ENCODE measurements at regions of chr6 and their contacts with region 1.

Region 1: DNA sequence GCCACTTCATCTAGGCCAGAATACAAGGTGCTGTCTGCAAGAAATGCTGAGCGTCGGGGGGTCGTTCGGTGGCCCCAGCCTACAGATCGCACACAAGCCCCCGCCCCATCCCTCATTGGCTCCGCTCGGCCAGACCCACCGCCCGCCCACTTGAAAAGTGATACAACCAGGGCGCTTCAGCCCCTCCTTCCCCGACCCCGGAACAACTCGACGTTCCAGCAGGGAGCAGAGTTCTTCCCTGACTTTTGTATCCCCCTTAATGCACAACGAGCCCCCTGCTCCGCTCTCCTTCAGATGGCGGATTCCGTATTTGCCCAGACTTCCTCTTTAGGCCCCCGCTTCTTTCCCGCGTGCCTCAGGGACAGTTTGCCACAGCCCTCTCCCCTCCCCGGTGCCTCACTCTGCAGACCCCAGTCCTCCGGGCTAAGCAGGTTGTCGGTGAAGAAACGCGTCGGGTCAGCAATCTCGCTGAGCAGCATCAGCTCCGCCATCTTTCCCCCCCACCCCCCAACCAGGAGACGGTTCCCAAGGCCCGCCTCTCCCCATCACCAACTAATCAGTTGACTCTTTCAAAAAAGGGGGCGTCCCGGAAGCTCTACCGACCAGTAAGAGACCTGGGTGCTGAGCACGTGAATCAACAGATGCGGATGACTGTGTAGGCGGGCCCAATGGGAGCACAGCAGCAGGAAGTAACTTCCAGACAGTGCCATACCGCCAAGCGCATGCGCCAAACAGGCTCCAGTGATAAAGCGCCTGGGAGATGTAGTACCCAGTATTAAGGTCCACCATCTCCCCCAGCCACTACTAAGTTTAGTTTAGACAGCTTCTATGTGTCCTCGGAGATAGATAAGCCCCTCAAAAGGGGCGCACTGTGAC is at the start of gene ATF6B:
- DNase-seq: peak; percentile 81
- ATAC-seq: peak; percentile 92
- H3K4me3 Mint-ChIP-seq: peak within 1 kb of the TSS; percentile 99
- H3K27ac Mint-ChIP-seq: peak within 1 kb of the TSS; percentile 95
- H3K4me1 Mint-ChIP-seq: peaks cover 53% of the 10 kb centered on the region
- H3K27me3 Mint-ChIP-seq: no peaks in the 10 kb centered on the region
- CTCF ChIP-seq: no peak
- total RNA-seq, gene ATF6B: 144 and 148 TPM in 2 replicates

Region 2: GRCh38 chr6:31958741-31959739 is 168.9 kb before region 1 on chr6 and contains the starts of genes NELFE and SKIC2:
- CTCF ChIA-PET with region 1: no interaction called
- POLR2A ChIA-PET with region 1: interaction called, 7 read pairs
- intact Hi-C with region 1: loop called (anchors 2 kb)
- DNase-seq: peak; percentile 96
- ATAC-seq: peak; percentile 98
- H3K4me3 Mint-ChIP-seq: peak within 1 kb of the TSS; percentile 95
- H3K27ac Mint-ChIP-seq: peak within 1 kb of the TSS; percentile 94
- H3K4me1 Mint-ChIP-seq: peaks cover 33% of the 10 kb centered on the region
- H3K27me3 Mint-ChIP-seq: no peaks in the 10 kb centered on the region
- CTCF ChIP-seq: no peak
- total RNA-seq, gene NELFE: 57.9 and 63.3 TPM in 2 replicates
- total RNA-seq, gene SKIC2: 95.8 and 102 TPM in 2 replicates

Region 3: DNA sequence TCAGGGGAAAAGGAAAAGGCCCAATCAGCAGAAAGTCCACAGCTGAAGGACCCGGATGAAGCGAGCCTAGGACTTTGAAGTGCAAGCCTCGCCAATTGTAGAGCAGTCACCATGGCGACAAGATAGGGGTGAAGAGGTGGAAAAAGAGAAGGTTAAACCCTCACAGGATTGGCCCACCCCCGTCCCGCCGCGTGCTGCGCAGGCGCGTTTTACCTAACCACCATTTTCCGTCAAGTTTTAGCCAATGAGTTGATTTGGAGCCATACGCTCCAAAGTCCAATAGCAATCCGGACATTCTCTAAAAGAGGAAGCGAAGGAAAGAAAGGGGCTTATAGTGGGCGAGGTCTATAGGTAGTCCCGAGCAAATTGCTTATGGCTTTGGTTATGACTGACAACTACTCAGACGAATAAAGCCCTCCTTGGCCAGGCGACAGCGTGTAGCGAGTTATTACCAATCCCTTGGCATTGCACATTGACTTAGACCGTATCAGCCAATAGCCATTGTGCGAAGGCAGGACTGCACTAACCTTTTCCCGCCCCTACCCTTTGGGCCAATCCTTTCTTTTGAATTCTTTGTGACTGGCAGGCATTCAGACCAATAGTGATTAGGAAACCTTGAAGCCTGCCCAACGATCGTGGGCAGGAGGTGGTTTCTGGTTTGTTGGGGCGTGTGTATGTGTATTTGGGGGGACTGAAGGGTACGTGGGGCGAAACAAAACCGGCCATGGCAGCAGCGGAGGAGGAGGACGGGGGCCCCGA is 50.0 kb after region 1 on chr6 and contains the start of gene RNF5:
- CTCF ChIA-PET with region 1: no interaction called
- POLR2A ChIA-PET with region 1: interaction called, 23 read pairs
- intact Hi-C with region 1: loop called (anchors 1 kb)
- DNase-seq: peak; percentile 63
- ATAC-seq: peak; percentile 82
- H3K4me3 Mint-ChIP-seq: peak within 1 kb of the TSS; percentile 96
- H3K27ac Mint-ChIP-seq: peak within 1 kb of the TSS; percentile 99
- H3K4me1 Mint-ChIP-seq: peaks cover 54% of the 10 kb centered on the region
- H3K27me3 Mint-ChIP-seq: no peaks in the 10 kb centered on the region
- CTCF ChIP-seq: no peak
- total RNA-seq, gene RNF5: 39.7 and 41.8 TPM in 2 replicates

Region 4: GRCh38 chr6:32195652-32195901 is 67.6 kb after region 1 on chr6:
- CTCF ChIA-PET with region 1: interaction called, 4 read pairs
- POLR2A ChIA-PET with region 1: interaction called, 59 read pairs
- intact Hi-C with region 1: loop called (anchors 1 kb)
- DNase-seq: peak; percentile 99
- ATAC-seq: peak; percentile 83
- H3K4me3 Mint-ChIP-seq: peak overlapping the region; percentile 99
- H3K27ac Mint-ChIP-seq: peak overlapping the region; percentile 100
- H3K4me1 Mint-ChIP-seq: peaks cover 57% of the 10 kb centered on the region
- H3K27me3 Mint-ChIP-seq: peaks cover 1% of the 10 kb centered on the region
- CTCF ChIP-seq: no peak

Region 5: GRCh38 chr6:32432050-32432450 is 304.1 kb after region 1 on chr6:
- CTCF ChIA-PET with region 1: no interaction called
- POLR2A ChIA-PET with region 1: no interaction called
- intact Hi-C with region 1: no loop called
- DNase-seq: no peak
- ATAC-seq: peak; percentile 43
- H3K4me3 Mint-ChIP-seq: no peak overlapping the region
- H3K27ac Mint-ChIP-seq: peak overlapping the region; percentile 24
- H3K4me1 Mint-ChIP-seq: peaks cover 33% of the 10 kb centered on the region
- H3K27me3 Mint-ChIP-seq: no peaks in the 10 kb centered on the region
- CTCF ChIP-seq: peak; percentile 65

Region 6: DNA sequence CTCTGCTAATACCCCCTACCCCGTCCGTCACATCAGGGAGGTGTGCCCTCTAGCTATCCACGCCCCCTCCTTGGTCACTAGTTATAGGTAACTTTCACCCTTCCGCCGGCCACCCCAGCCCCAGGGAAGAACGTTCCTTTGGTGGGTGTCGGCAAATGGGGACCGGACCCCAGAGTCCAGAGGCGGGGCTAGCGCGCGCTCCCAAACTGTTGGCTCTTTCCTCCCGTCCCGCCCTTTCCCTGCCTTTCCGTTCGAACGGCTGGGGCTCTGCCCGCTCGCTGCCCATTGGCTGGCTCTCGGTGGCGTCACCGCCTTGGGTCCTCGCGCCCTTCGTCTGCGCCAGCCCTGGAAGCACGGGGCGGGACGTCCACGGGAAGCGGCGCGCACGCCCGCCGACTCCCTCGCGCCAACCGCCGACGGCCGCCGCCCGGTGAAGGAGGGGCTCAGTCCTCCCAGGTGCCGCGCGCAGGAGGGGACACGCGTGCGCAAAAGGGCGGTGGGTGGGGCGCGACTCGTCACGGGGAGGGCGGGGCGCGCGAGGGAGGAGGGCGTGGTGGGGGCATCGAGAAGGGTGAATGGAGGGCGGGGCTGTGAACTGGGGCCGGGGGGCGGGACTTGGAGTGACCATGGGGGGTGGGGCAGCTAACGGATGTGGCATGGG is 1282.2 kb after region 1 on chr6:
- CTCF ChIA-PET with region 1: no interaction called
- POLR2A ChIA-PET with region 1: no interaction called
- intact Hi-C with region 1: loop called (anchors 5 kb)
- DNase-seq: peak; percentile 93
- ATAC-seq: peak; percentile 74
- H3K4me3 Mint-ChIP-seq: peak overlapping the region; percentile 88
- H3K27ac Mint-ChIP-seq: peak overlapping the region; percentile 87
- H3K4me1 Mint-ChIP-seq: peaks cover 47% of the 10 kb centered on the region
- H3K27me3 Mint-ChIP-seq: no peaks in the 10 kb centered on the region
- CTCF ChIP-seq: no peak